Prostate gland (tissue), 2 donors: ENCODE measurements at regions of chr1 and their contacts with region 1.

Region 1: GRCh38 chr1:151156515-151156819 is at the start of gene TNFAIP8L2:
- DNase-seq: no peak
- H3K4me3 ChIP-seq: peak within 1 kb of the TSS; percentile 3 to 9
- H3K27ac ChIP-seq: no peak within 1 kb of the TSS
- H3K4me1 ChIP-seq: no peaks in the 10 kb centered on the region
- H3K27me3 ChIP-seq: no peaks in the 10 kb centered on the region
- CTCF ChIP-seq: no peak
- POLR2A ChIP-seq: no peak
- total RNA-seq, gene TNFAIP8L2: 1.5 to 2.1 TPM

Region 2: GRCh38 chr1:151024540-151025146 is 131.8 kb before region 1 on chr1:
- intact Hi-C with region 1: loop called (anchors 5 kb)
- DNase-seq: peak; percentile 84
- H3K4me3 ChIP-seq: no peak overlapping the region
- H3K27ac ChIP-seq: no peak overlapping the region
- H3K4me1 ChIP-seq: no peaks in the 10 kb centered on the region
- H3K27me3 ChIP-seq: no peaks in the 10 kb centered on the region
- CTCF ChIP-seq: peak; percentile 29 to 75 (median 69)
- POLR2A ChIP-seq: no peak

Region 3: DNA sequence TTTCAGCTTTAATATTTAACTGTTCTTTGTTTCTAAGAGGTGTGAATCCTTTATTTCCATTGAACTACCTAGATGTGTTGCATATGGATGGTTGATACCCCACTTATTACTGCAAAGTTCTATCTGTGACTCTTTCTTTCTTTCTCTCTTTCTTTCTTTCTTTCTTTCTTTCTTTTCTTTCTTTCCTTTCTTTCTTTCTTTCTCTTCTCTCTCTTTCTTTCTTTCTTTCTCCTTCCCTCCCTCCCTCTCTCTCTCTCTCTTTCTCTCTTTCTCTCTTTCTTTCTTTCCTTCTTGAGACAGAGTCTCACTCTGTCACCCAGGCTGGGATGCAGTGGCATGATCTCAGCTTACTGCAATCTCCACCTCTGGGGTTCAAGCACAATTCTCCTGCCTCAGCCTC is 51.8 kb before region 1 on chr1:
- intact Hi-C with region 1: loop called (anchors 5 kb)
- DNase-seq: no peak
- H3K4me3 ChIP-seq: no peak overlapping the region
- H3K27ac ChIP-seq: no peak overlapping the region
- H3K4me1 ChIP-seq: no peaks in the 10 kb centered on the region
- H3K27me3 ChIP-seq: no peaks in the 10 kb centered on the region
- CTCF ChIP-seq: no peak
- POLR2A ChIP-seq: no peak